Astrocyte of the cerebellum (primary cell): ENCODE measurements at regions of chr2 and their contacts with region 1.

Region 1: GRCh38 chr2:119809339-119810048 is 49.8 kb downstream of the PTPN4 start:
- DNase-seq: peak; percentile 40
- H3K4me3 ChIP-seq: no peak overlapping the region
- CTCF ChIP-seq: no peak

Region 2: DNA sequence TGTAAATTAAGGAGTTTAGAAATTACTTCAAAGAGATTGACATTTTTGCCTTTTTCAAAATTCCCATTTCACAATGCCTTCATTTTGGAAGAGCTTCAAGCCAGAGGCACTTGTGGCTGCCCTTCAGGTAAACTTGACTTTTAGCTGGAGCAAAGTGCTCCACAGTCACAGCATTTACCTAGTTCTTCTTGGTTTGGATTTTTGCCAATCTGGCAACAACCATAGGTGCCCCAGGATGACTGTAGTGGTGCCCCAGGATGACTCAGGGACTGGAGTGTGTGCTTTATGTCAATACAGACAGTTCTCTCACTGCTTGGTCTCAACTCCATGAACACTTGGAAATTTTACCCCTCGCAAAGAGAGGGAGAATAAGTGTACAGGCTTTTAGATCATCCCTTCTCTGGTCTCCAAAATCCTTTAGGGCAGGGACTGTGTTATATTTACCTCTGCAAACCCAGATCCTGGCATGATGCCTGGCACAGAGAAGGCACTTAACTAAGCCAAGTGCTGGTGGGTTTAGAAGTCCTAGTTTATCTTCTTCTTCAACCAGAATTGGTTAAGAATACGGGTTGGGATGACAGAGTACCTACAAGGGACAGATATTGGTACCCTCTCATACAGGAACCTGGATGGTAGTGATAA is 65.1 kb before region 1 on chr2:
- in situ Hi-C with region 1: loop called (anchors 5 kb)
- DNase-seq: no peak
- H3K4me3 ChIP-seq: no peak overlapping the region
- CTCF ChIP-seq: no peak